Mammary epithelial cell (primary cell): ENCODE measurements at regions of chr2 and their contacts with region 1.

Region 1: GRCh38 chr2:173021939-173022371 is 53.7 kb upstream of the MAP3K20 start:
- DNase-seq: peak; percentile 41
- H3K4me3 ChIP-seq: no peak overlapping the region
- H3K27ac ChIP-seq: no peak overlapping the region
- H3K4me1 ChIP-seq: no peaks in the 10 kb centered on the region
- H3K27me3 ChIP-seq: no peaks in the 10 kb centered on the region
- CTCF ChIP-seq: peak; percentile 55 to 61

Region 2: DNA sequence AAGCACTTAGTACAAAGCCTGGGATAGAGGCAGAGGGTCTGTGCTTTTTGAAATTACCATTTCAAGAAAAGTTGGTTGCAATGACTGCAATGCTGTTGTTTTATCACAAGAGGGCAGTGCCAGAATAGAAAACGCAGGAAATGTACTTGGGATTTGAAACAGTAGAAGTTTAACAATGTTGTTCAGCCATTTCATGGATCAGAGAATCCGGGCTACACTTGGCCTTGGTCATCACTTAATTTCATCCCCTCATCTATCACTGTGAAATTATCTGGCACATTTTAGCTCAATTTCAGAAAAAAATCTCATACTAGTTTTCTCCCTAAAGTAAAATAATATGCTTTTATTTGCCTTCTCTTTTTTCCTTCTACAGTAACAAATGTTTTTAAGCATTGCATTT is 215.5 kb before region 1 on chr2:
- CTCF ChIA-PET with region 1: no interaction called
- dilution Hi-C with region 1: no loop called
- in situ Hi-C with region 1: loop called (anchors 5 to 10 kb)
- intact Hi-C with region 1: loop called (anchors 1 kb)
- DNase-seq: no peak
- H3K4me3 ChIP-seq: no peak overlapping the region
- H3K27ac ChIP-seq: no peak overlapping the region
- H3K4me1 ChIP-seq: peaks cover 9% of the 10 kb centered on the region
- H3K27me3 ChIP-seq: no peaks in the 10 kb centered on the region
- CTCF ChIP-seq: peak; percentile 90 to 96

Region 3: DNA sequence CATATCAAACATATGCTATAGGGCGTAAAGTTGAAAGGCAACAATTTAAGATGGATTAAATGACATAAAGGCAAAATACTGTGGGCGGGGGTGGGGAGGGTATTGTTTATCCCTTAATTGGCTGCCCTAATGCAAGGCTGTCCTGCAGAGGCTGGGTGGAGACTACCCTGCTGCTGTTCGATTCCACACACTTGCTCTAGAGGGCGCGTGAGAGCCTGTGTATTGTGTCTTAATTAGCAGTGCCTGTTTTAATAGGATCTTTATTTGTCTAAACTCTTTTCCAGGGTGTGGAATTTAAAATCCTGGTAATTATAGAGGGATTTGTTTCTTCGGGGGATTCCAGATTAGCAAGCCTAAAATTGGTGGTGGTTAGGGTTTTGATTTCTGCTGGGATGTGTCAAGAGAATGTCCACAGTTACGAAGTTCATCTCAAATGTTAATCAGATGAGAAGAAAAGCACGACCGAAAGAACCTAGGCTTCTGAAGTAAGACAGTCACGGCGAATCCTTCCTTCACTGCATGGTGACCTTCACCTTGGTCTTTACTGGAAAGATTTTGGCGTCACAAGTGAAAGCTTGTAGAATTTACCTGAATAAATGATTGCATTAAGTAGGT is 49.8 kb before region 1 on chr2:
- CTCF ChIA-PET with region 1: no interaction called
- dilution Hi-C with region 1: no loop called
- in situ Hi-C with region 1: loop called (anchors 5 kb)
- intact Hi-C with region 1: loop called (anchors 1 kb)
- DNase-seq: peak; percentile 44
- H3K4me3 ChIP-seq: no peak overlapping the region
- H3K27ac ChIP-seq: no peak overlapping the region
- H3K4me1 ChIP-seq: peaks cover 3% of the 10 kb centered on the region
- H3K27me3 ChIP-seq: no peaks in the 10 kb centered on the region
- CTCF ChIP-seq: peak; percentile 91 to 98

Region 4: DNA sequence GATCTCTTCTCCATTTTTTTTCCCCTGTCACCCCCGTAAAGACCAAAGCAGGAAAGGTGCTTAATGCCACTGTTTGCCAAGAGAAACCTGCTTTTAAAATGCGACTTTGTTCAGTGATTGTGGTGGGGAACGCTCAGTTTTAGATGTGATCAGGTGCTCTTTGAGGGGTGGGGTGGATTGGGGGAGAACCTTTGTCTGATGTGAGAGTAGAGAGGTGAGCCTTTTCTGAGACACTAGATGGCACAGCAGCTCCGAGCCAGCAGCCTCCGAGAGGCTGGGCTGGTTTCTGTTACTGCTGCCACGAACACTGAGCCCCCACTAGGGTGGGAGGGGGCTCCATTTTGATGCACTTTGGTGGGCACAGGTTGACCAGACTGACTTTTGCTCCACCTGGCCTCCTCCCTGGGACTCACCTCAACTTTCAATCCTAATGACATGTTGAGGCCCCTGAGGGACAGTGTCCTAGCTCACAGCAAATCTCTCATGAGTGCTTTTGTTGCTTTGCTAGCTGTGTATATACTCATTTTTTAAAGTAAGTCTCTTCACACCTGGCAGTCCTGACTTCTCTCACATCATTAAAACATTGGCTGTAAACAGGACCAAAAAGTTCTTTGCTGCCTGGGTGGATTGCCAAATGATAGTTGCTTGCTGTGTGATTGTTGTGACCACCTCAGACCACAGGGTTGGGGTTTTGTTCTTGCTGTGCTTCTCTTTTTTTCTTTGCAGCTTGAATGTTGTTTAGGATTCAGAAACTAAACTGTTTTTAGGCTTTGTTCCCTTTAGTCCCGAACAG is 44.5 kb before region 1 on chr2:
- CTCF ChIA-PET with region 1: no interaction called
- dilution Hi-C with region 1: no loop called
- in situ Hi-C with region 1: loop called (anchors 5 kb)
- intact Hi-C with region 1: loop called (anchors 1 kb)
- DNase-seq: no peak
- H3K4me3 ChIP-seq: no peak overlapping the region
- H3K27ac ChIP-seq: no peak overlapping the region
- H3K4me1 ChIP-seq: no peaks in the 10 kb centered on the region
- H3K27me3 ChIP-seq: no peaks in the 10 kb centered on the region
- CTCF ChIP-seq: peak in 1 of 2 donors; percentile 37